H1 (cell line): ENCODE measurements at regions of chr7 and their contacts with region 1.

Region 1: GRCh38 chr7:23570592-23571200 is 26.5 kb upstream of the CCDC126 start:
- DNase-seq: peak; percentile 58 to 88
- H3K4me3 ChIP-seq: no peak overlapping the region
- H3K27ac ChIP-seq: no peak overlapping the region
- H3K4me1 ChIP-seq: no peaks in the 10 kb centered on the region
- H3K27me3 ChIP-seq: no peaks in the 10 kb centered on the region
- CTCF ChIP-seq: peak; percentile 65 to 94 (median 92)
- EP300 ChIP-seq: no peak
- POLR2A ChIP-seq: no peak
- RAD21 ChIP-seq: peak; percentile 98 to 99

Region 2: GRCh38 chr7:23520582-23520981 is 50.1 kb before region 1 on chr7:
- CTCF ChIA-PET with region 1: no interaction called
- POLR2A ChIA-PET with region 1: no interaction called
- DNase-seq: peak in 1 of 2 experiments; percentile 53
- H3K4me3 ChIP-seq: no peak overlapping the region
- H3K27ac ChIP-seq: no peak overlapping the region
- H3K4me1 ChIP-seq: peaks cover 0 to 2% (median 0%) of the 10 kb centered on the region in 4 experiments; a peak in 1 of 7 replicates
- H3K27me3 ChIP-seq: no peaks in the 10 kb centered on the region
- CTCF ChIP-seq: peak in 2 of 3 experiments; percentile 24 to 25; a peak in 2 of 4 replicates
- EP300 ChIP-seq: no peak
- POLR2A ChIP-seq: no peak
- RAD21 ChIP-seq: peak; percentile 40 to 41; a peak in 3 of 4 replicates

Region 3: GRCh38 chr7:23546897-23547572 is 23.7 kb before region 1 on chr7:
- CTCF ChIA-PET with region 1: interaction called, 14 read pairs
- POLR2A ChIA-PET with region 1: no interaction called
- DNase-seq: peak; percentile 75 to 79
- H3K4me3 ChIP-seq: no peak overlapping the region
- H3K27ac ChIP-seq: no peak overlapping the region
- H3K4me1 ChIP-seq: no peaks in the 10 kb centered on the region
- H3K27me3 ChIP-seq: no peaks in the 10 kb centered on the region
- CTCF ChIP-seq: peak; percentile 49 to 97 (median 91)
- EP300 ChIP-seq: 0 out of 3 replicates have a peak, but pooled peaks of 1 of the 2 experiments have one; percentile 25
- POLR2A ChIP-seq: no peak
- RAD21 ChIP-seq: peak; percentile 90 to 94